OCI-LY7 (cell line): ENCODE measurements at regions of chr6 and their contacts with region 1.

Region 1: DNA sequence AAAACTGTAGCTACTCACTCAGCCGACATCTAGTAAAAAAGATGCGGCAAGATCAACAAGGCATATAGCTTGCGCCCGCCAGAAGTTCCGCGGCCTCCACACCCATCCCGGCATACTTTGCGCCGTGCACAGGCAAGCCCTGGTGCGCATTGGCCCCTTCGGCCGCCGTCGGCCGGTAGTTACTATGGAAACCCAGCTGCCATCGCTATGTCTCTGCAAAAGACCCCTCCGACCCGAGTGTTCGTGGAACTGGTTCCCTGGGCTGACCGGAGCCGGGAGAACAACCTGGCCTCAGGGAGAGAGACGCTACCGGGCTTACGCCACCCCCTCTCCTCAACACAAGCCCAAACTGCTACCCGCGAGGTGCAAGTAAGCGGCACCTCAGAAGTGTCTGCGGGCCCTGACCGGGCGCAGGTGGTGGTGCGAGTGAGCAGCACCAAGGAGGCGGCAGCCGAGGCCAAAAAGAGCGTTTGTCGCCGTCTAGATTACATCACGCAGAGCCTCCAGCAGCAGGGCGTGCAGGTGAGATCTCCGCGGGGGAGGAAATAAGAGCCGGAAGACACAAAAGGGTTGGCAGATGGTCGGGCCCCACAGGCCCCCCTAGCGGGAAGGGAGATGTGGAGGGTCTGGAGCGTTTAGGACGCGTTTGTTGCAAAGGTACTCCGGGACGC is at the start of gene IRAK1BP1:
- DNase-seq: peak; percentile 95
- H3K4me3 ChIP-seq: peak within 1 kb of the TSS; percentile 88
- H3K27ac ChIP-seq: peak within 1 kb of the TSS; percentile 93
- H3K4me1 ChIP-seq: peaks cover 13% of the 10 kb centered on the region
- CTCF ChIP-seq: peak; percentile 64
- total RNA-seq, gene IRAK1BP1: 5.9 and 7.6 TPM in 2 replicates

Region 2: DNA sequence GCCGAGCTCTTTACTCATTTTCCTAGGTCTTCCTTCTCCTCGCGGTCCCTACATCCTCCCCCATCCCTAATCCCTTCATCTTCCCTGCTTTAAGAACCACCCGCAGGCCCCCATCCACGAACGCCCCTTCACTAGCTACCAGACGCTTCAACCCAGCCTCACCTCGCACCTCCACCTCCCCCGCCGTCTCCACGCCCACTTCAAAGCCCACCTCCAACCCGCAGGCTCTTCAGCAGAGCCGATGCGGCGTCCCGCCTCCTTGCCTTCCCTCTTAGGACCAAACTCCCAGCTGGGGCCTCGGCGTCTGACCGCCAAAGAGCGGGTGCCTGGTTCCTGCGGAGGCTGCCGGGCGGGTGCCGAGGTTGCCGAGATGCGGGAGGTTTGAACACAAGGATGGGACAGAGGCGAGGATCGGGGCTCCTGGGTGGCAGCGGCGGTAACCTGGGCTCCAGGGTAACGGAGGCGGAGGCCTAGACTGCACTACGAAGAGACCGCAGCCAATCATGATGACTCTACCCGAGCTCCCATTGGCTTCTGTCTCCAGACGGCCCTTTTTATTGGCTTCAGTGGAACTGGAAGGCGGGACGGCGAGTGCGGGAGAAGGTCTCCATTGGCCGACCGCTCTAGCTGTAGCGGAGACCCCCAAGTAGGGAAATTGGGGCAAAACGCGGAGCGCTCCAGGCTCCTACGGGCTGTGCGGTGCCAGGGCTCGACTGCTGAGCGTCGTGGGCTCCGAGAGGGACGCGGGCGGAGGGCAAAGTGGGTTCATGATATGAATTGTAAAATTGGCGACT is 669.6 kb after region 1 on chr6 and contains the start of gene LCA5:
- CTCF ChIA-PET with region 1: no interaction called
- POLR2A ChIA-PET with region 1: interaction called, 5 read pairs
- intact Hi-C with region 1: loop called (anchors 5 kb)
- DNase-seq: peak; percentile 96
- H3K4me3 ChIP-seq: peak within 1 kb of the TSS; percentile 69
- H3K27ac ChIP-seq: no peak within 1 kb of the TSS
- H3K4me1 ChIP-seq: peaks cover 14% of the 10 kb centered on the region
- CTCF ChIP-seq: no peak
- total RNA-seq, gene LCA5: 0.77 and 1.3 TPM in 2 replicates